Heart left ventricle (tissue), 16 donors: ENCODE measurements at regions of chr17 and their contacts with region 1.

Region 1: GRCh38 chr17:3535253-3535995 is 22.2 kb downstream of the TRPV3 start:
- DNase-seq: peak; percentile 53 to 76 (median 69)
- ATAC-seq: peak; percentile 57 to 87 (median 74)
- H3K4me3 ChIP-seq: peak overlapping the region in 11 of 12 donors; percentile 15 to 60 (median 48)
- H3K27ac ChIP-seq: peak overlapping the region in 9 of 12 donors; percentile 22 to 73 (median 62)
- H3K4me1 ChIP-seq: peaks cover 0 to 19% (median 8%) of the 10 kb centered on the region in 12 donors
- H3K27me3 ChIP-seq: no peaks in the 10 kb centered on the region
- CTCF ChIP-seq: peak; percentile 33 to 83 (median 62)
- POLR2A ChIP-seq: no peak

Region 2: DNA sequence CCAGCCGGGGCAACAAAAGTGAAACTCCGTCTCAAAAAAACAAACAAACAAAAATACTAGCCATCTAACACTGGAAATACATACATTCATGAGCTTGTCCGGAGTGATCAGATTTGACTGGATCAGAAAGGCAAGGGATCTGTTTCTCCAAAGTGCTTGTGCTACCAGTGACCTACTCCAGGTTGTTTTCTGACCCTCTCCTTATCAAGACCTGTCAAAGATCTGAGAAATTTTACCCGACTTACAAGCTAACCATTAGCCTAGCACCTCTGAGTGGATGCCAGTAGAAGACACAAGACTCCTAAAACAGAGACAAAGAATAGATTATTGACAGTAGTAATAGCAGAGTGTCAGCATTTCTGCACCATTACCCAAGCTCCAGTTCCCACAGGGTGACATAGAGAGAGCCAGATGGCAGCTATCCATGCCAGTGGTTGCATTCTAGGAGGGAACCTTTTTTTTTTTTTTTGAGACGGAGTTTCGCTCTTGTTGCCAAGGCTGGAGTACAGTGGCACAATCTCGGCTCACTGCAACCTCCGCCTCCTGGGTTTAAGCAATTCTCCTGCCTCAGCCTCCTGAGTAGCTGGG is 49.8 kb before region 1 on chr17:
- intact Hi-C with region 1: no loop called
- DNase-seq: no peak
- ATAC-seq: no peak
- H3K4me3 ChIP-seq: no peak overlapping the region
- H3K27ac ChIP-seq: no peak overlapping the region
- H3K4me1 ChIP-seq: no peaks in the 10 kb centered on the region
- H3K27me3 ChIP-seq: peaks cover 0 to 6% (median 0%) of the 10 kb centered on the region in 9 donors
- CTCF ChIP-seq: no peak
- POLR2A ChIP-seq: no peak

Region 3: DNA sequence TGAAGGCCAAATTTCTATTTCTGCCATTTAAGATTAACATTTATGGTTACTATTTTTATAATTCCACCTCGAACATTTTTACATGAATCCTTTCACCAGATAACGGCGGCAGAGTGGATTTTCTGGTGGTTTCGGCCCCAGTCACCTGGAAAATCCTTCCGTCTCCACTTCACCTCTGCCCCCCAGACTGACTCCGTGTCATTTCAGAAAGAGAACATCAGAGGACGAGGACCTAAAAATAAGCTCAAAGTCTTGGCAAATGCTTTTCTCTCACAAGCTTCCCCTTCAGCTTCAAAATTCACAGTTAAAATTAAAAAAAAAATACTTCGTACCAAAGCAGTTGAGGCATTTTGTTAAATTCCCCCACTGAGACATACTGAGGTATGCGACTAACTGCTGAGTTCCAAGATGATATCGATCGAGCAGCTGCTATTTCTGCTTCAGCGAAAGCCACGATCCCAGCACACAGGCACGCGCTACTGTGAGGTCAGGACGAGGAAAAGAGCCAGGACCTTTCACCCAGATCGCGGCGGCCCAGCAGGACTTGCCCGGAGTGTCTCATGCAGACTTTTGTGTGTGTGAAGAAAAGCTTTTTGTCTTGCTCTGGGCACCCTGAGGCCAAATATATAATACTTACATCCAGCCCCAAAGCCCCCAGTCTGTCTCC is 22.8 kb before region 1 on chr17:
- intact Hi-C with region 1: loop called in 2 of 10 experiments (anchors 2 kb)
- DNase-seq: peak; percentile 77 to 93 (median 87)
- ATAC-seq: peak; percentile 93 to 98 (median 96)
- H3K4me3 ChIP-seq: peak overlapping the region in 9 of 12 donors; percentile 5 to 31 (median 17)
- H3K27ac ChIP-seq: peak overlapping the region; percentile 84 to 97 (median 91)
- H3K4me1 ChIP-seq: peaks cover 0 to 31% (median 22%) of the 10 kb centered on the region in 12 donors
- H3K27me3 ChIP-seq: no peaks in the 10 kb centered on the region
- CTCF ChIP-seq: no peak
- POLR2A ChIP-seq: no peak

Region 4: DNA sequence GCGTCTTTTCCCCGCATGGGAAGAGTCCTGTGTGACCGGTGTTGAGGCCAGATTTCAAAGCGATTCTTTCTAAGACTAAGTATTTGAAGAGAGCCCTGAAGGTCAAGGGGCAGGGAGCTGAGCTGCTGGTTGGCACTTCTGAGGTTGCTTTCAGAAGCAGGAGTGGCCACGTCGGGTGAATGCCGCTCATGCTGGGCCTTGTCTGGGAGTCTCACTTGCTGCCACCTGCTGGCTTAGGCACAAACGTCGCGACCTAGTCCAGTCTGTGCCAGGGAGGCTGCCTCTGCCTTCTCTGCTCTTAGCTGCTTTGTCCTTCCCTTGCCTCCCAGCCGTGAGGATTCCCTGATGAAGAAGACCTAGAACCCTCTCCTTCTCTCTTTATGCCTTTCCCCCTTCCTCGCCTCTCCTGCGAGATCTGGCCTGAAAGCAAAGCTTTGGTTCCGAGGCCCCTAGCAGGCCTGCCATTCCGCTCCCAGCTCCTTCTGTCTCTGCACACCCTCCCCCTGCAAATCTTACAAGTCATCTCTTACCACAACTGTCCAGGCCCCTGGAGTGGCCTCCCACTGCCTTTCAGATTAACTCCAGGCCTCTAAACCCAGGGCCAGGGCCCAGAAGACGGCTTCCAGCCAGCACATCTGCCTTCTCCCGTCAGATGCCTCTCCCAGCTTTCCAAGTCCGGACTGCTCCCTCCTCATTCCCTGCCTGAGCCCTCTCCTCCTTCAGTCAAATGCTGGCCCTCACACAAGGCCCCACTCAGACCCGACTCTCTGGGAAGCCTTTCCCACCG is 112.5 kb after region 1 on chr17:
- intact Hi-C with region 1: loop called in 1 of 10 experiments (anchors 10 kb)
- DNase-seq: peak in 2 of 5 donors; percentile 70 to 72
- ATAC-seq: peak; percentile 63 to 80 (median 77)
- H3K4me3 ChIP-seq: no peak overlapping the region
- H3K27ac ChIP-seq: no peak overlapping the region
- H3K4me1 ChIP-seq: peaks cover 0 to 9% (median 0%) of the 10 kb centered on the region in 12 donors
- H3K27me3 ChIP-seq: no peaks in the 10 kb centered on the region
- CTCF ChIP-seq: peak; percentile 24 to 62 (median 39)
- POLR2A ChIP-seq: no peak